A673 (cell line): ENCODE measurements at regions of chr2 and their contacts with region 1.

Region 1: DNA sequence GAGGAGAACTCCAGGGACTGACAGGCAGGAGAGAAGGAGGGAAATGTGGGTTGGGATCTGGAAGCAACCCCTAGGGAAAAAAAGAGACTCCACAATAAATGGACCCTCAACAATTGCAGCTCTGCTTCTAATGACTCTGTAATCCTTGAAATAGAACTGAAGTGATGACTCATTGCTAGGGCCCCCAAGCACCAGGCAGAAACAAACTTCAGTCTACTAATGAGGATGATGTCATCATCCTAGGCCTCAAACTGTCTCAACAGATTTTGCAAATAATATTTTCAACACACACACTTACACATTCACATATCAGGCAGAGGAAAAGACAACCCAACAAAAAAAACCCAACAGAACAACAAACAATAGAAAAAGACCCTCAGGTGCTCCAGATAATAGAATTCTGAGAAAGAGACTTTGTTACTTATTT is 143.3 kb downstream of the HDAC4 start:
- DNase-seq: peak; percentile 88
- H3K4me3 ChIP-seq: no peak overlapping the region
- H3K27ac ChIP-seq: peak overlapping the region; percentile 38
- H3K4me1 ChIP-seq: peaks cover 56% of the 10 kb centered on the region
- H3K27me3 ChIP-seq: no peaks in the 10 kb centered on the region
- CTCF ChIP-seq: no peak

Region 2: DNA sequence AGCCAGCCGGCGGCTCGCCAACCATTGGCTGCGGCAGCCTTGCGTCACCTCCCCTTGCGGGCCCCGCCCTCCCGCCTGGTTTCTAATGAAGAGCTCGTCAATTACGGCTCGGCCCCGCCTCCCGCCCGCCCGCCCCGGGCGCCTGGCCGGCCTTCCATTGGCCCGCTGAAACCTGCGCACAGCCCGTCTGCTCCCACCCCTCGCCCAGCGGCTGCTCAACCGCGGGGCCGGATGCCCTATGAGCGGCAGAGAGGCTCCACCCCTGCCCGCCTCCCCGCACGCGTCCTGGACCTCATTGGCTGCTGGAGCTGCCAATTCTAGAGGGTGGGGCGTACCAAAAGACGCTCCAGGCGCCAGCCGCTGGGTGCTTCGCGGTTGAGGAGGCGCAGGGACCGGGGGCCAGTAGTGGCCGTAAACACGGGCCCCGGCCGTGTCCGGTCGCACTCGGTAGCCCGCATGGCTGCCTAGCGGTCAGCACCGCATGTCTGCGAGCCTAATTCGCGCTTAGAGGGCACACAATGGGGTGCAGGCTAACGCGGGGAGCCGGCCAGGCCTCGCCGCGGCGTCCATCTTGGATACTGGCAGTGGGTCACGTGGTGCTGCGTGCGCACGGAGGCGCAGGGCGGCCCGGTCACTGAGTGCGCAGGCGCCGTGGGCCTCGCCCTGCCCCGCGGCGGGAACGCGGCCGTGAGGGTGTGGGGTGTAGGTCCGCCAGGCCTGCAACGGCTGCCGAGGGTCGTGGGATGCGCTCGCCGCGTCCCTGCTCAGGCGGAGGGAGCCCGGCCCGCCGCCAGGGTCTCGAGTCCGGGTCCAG is 143.8 kb after region 1 on chr2:
- CTCF ChIA-PET with region 1: no interaction called
- POLR2A ChIA-PET with region 1: no interaction called
- intact Hi-C with region 1: loop called (anchors 10 kb)
- DNase-seq: peak; percentile 99
- H3K4me3 ChIP-seq: peak overlapping the region; percentile 63
- H3K27ac ChIP-seq: peak overlapping the region; percentile 100
- H3K4me1 ChIP-seq: peaks cover 26% of the 10 kb centered on the region
- H3K27me3 ChIP-seq: no peaks in the 10 kb centered on the region
- CTCF ChIP-seq: no peak

Region 3: GRCh38 chr2:239688122-239688681 is 430.7 kb after region 1 on chr2:
- CTCF ChIA-PET with region 1: no interaction called
- POLR2A ChIA-PET with region 1: no interaction called
- intact Hi-C with region 1: no loop called
- DNase-seq: peak; percentile 5
- H3K4me3 ChIP-seq: no peak overlapping the region
- H3K27ac ChIP-seq: no peak overlapping the region
- H3K4me1 ChIP-seq: no peaks in the 10 kb centered on the region
- H3K27me3 ChIP-seq: peaks cover 53% of the 10 kb centered on the region
- CTCF ChIP-seq: peak; percentile 45